Mammary epithelial cell (primary cell): ENCODE measurements at regions of chr14 and their contacts with region 1.

Region 1: GRCh38 chr14:36647824-36648753 is 13.6 kb upstream of the PAX9 start:
- DNase-seq: peak; percentile 58
- H3K4me3 ChIP-seq: peak overlapping the region; percentile 51 to 66 (median 56)
- H3K27ac ChIP-seq: no peak overlapping the region
- H3K4me1 ChIP-seq: peaks cover 16% of the 10 kb centered on the region
- H3K27me3 ChIP-seq: peaks cover 47% of the 10 kb centered on the region
- CTCF ChIP-seq: peak; percentile 52 to 78

Region 2: DNA sequence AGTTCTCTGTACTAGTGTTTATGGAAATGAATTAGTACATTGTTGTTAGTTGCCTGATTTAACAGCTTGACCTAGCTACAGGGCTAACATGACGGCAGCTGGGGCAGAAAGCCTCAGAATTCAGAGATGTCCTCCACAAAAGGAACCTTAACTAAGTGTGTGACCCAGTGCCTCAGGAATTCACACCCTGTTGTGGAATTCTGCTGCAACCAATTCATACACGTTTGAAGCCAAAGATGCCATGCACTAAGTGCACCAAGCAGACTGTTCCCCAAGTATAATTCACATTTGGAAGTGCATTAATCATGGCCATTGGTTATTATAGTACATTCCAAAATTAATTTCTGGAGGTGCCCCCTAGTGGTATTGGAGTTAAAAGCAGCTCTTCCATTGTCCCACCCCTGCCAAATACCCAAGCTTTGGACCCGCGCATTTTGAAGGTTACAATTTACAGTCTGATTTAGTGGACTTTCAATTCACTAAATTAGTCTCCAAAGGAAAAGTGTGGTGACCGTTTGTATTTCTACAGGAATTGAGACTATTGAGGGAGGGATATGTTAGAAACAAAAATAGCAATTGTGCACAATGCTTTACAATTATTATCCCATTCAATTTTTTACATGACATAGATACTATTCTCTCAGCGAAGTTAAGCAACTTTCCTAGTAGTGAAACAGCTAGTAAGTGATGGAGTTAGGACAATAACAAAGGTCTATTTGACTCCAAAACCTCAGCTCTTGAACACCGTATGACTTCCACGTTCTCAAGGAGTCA is 99.5 kb after region 1 on chr14:
- CTCF ChIA-PET with region 1: no interaction called
- dilution Hi-C with region 1: no loop called
- in situ Hi-C with region 1: no loop called
- intact Hi-C with region 1: loop called (anchors 1 kb)
- DNase-seq: no peak
- H3K4me3 ChIP-seq: no peak overlapping the region
- H3K27ac ChIP-seq: no peak overlapping the region
- H3K4me1 ChIP-seq: no peaks in the 10 kb centered on the region
- H3K27me3 ChIP-seq: peaks cover 4% of the 10 kb centered on the region
- CTCF ChIP-seq: peak; percentile 56 to 65

Region 3: DNA sequence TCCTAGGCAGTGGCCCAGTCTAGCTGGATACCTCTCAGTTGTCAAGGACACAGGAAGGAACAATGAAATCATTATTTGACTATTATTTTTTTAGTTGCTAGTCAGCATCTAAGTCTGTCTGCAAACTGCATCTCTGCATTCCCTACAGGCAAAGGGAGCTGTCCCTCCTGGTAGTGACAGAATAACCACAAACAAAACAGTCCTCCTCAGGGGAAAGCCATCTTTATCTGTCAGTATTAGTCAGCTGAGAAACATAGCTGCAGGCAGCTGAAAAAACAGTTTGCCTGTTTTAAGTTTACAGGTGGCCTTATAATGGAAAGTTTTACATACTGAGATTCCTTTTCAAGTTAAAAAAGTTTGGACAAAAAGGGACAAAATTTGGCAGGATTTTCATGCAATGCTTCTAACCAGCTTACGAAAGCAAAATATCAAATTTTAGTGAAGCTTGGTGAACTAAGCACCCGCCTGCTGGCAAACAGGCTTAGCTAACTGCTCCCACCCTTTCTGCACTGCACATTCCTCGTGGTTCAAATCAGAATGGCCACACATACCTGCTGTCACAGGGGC is 494.8 kb after region 1 on chr14:
- CTCF ChIA-PET with region 1: interaction called, 6 read pairs
- dilution Hi-C with region 1: no loop called
- in situ Hi-C with region 1: loop called in 1 of 2 experiments (anchors 25 kb)
- intact Hi-C with region 1: no loop called
- DNase-seq: peak; percentile 82
- H3K4me3 ChIP-seq: no peak overlapping the region
- H3K27ac ChIP-seq: no peak overlapping the region
- H3K4me1 ChIP-seq: peaks cover 14% of the 10 kb centered on the region
- H3K27me3 ChIP-seq: no peaks in the 10 kb centered on the region
- CTCF ChIP-seq: no peak

Region 4: DNA sequence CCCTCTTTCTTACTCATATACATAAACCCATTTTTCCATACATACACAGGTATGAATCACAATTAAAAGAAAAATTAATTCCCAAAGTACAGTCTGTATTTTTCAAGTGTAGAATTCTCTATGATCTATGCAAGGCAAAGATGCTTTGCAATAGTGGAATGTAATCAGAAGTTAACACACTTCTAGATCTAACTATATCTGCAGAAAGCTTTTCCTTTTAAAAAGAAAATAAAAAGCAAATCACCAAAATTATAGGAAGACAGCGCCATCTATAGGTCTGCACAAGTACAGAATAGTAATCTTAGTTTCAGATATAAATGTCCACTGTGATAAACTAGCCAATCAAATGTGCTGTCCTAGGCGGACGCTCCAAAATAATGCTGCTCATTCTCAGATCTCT is 502.3 kb after region 1 on chr14:
- CTCF ChIA-PET with region 1: interaction called, 6 read pairs
- dilution Hi-C with region 1: no loop called
- in situ Hi-C with region 1: loop called in 1 of 2 experiments (anchors 25 kb)
- intact Hi-C with region 1: loop called (anchors 1 kb)
- DNase-seq: peak; percentile 36
- H3K4me3 ChIP-seq: no peak overlapping the region
- H3K27ac ChIP-seq: no peak overlapping the region
- H3K4me1 ChIP-seq: peaks cover 2% of the 10 kb centered on the region
- H3K27me3 ChIP-seq: no peaks in the 10 kb centered on the region
- CTCF ChIP-seq: peak; percentile 65 to 68

Region 5: DNA sequence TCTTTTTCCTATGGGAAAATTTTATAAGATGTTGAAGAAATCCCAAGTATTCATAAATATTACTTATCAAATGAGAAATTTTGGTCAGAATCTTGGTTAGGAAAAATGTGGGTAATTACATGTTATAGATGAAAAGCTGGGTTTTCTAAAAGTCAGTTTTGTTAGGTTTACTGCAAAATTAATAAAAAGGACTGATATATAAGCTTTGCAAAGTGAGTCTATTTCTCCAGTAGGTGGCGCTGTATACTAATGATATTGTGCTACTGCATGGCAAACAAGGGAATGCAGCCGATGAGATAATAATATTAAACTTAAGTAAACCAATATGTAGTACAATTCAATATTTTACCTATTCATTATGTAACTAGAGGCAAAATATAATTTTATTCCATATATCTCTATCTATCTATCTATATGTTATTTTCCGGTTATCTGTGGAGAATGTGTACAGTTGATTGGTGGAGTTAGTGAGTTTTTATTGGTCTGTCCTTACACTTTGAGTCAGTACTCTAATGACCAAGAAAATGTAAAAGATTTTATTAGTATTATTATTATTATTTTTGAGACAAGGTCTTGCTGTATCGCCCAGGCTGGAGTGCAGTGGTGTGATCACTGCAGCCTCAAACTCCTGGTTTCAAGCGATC is 582.6 kb after region 1 on chr14:
- CTCF ChIA-PET with region 1: no interaction called
- dilution Hi-C with region 1: no loop called
- in situ Hi-C with region 1: no loop called
- intact Hi-C with region 1: loop called (anchors 2 kb)
- DNase-seq: peak; percentile 31
- H3K4me3 ChIP-seq: no peak overlapping the region
- H3K27ac ChIP-seq: no peak overlapping the region
- H3K4me1 ChIP-seq: no peaks in the 10 kb centered on the region
- H3K27me3 ChIP-seq: no peaks in the 10 kb centered on the region
- CTCF ChIP-seq: peak; percentile 70 to 75